PC-3 (cell line): ENCODE measurements at regions of chr1 and their contacts with region 1.

Region 1: GRCh38 chr1:236868625-236869467 is 73.8 kb downstream of the MTR start:
- DNase-seq: peak; percentile 54
- ATAC-seq: peak; percentile 74
- H3K4me3 ChIP-seq: no peak overlapping the region
- H3K27ac ChIP-seq: no peak overlapping the region
- H3K4me1 ChIP-seq: no peaks in the 10 kb centered on the region
- H3K27me3 ChIP-seq: no peaks in the 10 kb centered on the region
- CTCF ChIP-seq: peak; percentile 85

Region 2: DNA sequence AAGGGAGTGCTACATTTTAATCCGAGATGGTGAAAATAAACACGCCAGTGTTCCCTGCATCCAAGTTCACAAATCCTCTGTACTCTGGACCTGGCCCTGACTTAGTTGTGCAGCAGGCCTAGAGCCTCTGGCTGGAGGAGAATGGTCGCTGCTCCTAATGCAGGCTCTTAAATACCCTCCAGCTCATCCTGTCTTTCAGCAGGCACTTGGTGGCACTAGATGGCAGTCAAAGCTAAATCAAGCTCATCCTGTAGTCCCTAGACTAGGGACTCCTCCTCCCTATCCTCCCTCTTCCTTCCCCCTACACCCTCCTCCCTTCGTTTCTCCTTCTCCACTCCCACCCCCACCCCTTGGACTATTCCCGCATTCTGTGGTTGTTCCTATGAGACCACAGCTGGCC is 115.3 kb before region 1 on chr1:
- CTCF ChIA-PET with region 1: no interaction called
- POLR2A ChIA-PET with region 1: no interaction called
- intact Hi-C with region 1: loop called (anchors 2 kb)
- DNase-seq: peak; percentile 54
- ATAC-seq: peak; percentile 94
- H3K4me3 ChIP-seq: no peak overlapping the region
- H3K27ac ChIP-seq: no peak overlapping the region
- H3K4me1 ChIP-seq: no peaks in the 10 kb centered on the region
- H3K27me3 ChIP-seq: peaks cover 48% of the 10 kb centered on the region
- CTCF ChIP-seq: peak; percentile 52

Region 3: DNA sequence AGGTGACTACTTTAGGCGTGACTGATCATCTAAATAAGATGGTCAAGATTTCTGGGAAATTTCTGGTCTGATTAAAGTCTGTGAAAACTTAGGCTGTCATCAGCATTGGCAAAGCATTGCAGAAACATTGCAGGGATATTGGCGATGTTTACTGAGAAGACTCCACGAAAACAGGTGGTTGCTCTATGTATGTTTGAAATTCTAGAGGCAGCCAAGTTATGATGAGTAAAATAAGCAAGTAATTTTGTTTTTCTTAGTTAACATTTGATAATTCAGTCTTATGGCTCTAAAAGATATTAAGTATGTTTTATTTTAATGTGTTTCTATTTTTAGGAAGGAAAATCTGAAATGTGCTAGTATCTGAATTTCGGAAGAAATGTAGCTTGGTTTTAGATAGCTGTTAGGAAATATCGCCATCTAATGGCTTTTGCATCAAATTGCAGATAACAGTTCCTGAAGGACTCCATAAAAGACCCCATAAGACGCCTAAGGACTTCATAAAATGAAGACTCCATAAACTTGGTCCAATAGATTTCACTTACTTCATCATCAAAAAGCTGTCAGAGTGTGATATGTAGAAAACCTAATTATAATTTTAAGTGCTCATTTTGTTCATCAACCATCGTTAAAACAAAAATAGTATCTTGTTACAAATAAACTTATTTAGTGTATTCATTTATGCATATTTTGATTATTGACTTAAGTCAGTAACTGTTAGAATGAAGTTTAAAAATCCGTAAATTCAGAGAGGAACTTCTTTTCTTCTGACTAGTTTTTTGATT is 517.7 kb after region 1 on chr1:
- CTCF ChIA-PET with region 1: no interaction called
- POLR2A ChIA-PET with region 1: no interaction called
- intact Hi-C with region 1: loop called (anchors 10 kb)
- DNase-seq: peak; percentile 25
- ATAC-seq: no peak
- H3K4me3 ChIP-seq: no peak overlapping the region
- H3K27ac ChIP-seq: no peak overlapping the region
- H3K4me1 ChIP-seq: no peaks in the 10 kb centered on the region
- H3K27me3 ChIP-seq: peaks cover 17% of the 10 kb centered on the region
- CTCF ChIP-seq: peak; percentile 66